AG04450 (cell line): ENCODE measurements at regions of chr6 and their contacts with region 1.

Region 1: DNA sequence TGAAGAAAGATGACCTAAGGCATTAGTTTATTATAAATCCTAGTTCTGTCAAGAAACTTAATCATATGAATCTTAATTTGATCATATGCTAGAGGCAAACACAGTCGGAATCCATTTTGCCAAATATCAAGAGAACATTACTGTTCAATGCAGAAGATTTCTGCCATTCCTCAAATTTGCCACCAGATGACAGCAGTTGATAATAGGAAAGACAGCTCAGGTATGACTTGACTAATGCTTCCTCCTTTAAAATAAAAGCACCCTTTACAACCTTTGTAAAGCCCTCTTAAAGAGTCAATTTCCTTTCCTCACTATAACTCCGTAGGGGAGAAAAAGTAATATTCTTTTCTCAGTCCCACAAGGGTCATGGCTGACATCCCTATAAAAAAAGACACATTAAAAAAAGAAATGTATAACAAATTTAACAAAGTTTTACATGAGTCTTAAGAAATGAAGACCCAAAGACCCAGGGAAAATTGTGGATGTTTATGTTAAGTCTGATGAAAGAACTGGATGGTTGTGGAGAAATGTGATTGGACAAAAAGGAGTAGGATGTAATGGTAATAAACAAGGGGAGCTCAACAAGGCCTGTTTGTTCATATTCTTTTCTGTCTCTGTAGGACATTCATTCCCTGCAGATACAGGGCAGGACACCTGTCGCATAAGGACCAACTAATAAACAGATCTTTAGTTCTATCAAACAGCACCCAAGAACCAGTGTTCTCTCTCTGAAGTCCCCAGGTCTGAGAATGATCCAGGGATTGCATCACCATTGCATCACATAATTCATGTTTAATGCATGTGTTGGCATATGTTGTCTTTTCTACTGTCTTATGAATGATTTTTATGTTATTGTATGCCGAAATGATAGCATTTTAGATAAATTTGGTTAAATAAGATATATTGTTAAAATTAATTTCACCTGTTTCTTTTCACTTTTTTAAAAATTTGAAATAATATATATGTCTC is 23.0 kb upstream of the IL17A start:
- DNase-seq: peak; percentile 1
- H3K4me3 ChIP-seq: no peak overlapping the region
- H3K27ac ChIP-seq: no peak overlapping the region
- H3K27me3 ChIP-seq: no peaks in the 10 kb centered on the region
- CTCF ChIP-seq: peak; percentile 81

Region 2: DNA sequence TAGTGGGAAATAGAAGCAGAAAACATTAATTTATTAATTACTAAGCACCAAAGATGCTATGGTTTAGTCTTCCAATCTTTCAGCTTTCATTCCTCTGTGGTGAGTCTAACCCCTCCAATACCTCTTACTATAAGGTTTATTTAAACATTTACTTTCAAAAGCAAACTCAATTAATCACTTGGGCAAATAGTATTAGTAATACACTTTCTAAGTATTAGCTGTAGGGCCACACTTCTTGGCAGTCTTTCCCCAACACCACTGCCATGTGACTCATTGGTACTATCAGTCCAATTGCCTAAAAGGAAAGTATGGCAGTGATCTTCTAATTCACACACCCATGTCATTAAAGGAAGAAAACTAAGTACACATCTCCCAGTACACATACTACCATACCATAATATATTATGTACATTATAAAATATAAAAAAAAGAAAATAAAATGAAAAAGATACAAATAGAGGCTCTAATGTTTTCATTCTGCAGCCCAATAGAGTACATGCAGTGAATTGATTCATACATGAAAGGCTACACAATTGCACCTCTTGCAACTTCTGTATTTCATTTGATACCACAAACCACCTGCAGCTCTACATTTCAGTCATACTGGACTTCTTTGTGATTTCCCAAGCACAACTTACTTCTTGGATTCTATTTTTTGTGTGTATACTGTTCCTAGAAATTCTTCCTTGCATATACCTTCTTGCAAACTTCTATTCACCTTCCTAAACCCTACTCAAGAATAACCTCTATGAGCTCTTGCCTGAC is 294.5 kb before region 1 on chr6:
- CTCF ChIA-PET with region 1: no interaction called
- POLR2A ChIA-PET with region 1: no interaction called
- DNase-seq: no peak
- H3K4me3 ChIP-seq: no peak overlapping the region
- H3K27ac ChIP-seq: no peak overlapping the region
- H3K27me3 ChIP-seq: no peaks in the 10 kb centered on the region
- CTCF ChIP-seq: no peak

Region 3: DNA sequence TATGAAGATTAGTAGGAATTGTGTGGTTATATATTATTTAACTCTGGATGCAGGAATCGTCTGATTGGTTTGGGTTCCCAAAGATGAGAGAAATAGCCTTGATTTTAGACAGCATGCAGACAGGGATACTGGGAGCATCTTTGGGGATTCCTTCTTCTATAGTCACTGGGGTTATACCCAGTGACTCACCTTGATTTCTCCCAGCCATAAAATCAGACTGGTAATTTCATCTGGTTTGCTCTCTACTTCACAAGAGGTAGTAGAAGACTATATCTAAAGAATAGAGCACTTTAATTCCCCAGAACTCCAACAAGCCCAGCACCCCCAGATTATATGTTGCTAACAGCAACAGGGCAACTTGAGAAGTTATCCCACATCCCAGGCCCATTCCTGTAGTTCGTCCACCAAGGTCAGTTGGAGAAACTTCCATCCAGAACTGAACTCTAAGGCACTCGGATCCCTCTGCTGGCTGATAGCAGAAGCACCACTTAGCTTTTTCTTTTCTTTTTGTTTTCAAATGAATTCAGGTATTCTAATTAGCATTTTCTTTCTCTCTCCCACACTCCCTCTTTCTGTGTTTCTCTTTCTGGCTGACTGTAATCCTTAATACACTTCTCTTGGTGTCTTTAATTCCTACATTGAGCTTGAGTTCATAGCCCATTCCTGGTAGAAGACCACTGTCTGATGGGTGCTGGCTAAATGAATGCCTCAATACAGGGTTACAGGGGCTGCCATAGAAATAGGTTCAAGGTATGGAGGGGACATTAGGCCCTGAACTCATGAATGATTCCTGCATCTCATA is 236.5 kb after region 1 on chr6:
- CTCF ChIA-PET with region 1: interaction called, 23 read pairs
- POLR2A ChIA-PET with region 1: interaction called, 3 read pairs
- DNase-seq: no peak
- H3K4me3 ChIP-seq: no peak overlapping the region
- H3K27ac ChIP-seq: no peak overlapping the region
- H3K27me3 ChIP-seq: no peaks in the 10 kb centered on the region
- CTCF ChIP-seq: peak; percentile 95